A673 (cell line): ENCODE measurements at regions of chr1 and their contacts with region 1.

Region 1: DNA sequence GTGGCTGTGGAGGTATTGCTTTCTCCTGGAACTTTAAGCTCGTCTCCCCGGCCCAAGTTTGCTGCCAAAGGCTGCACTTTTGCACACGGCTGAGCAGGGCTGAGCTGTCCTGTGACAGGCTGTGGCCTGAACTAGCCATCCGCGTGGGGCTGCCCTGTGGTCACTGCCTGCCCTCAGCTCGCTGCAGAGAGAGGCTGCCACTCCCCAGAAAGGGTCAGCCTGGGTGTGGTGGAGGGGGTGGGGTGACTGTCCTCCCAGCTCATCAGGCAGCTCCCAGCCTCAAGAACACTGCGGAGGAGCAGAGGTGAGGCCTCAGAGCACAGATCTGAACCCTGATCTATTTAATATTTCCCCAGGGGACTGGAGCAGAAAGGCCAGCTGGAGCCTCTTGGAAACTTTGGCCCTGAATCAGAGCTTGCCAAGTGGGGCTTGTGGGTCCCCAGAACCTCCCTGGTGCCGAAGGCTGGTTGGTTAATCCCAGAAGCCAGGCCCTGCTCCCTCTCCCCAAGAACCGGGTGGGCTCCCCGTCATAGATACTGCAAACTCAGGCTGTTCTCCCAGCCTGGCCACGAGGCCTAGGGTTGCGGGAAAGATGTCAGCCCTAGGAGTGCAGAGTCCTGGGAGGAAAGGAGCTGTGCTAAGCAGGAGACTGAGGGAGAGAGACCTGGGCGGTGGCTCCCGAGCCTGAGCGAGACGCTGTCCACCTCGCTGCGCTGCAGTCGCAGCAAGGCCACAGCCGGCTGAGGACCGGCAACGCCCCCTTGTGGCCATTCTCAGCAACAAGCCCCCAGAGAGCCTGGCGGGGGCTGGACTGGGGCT is 125.1 kb upstream of the IPO9 start:
- DNase-seq: peak; percentile 87
- H3K4me3 ChIP-seq: no peak overlapping the region
- H3K27ac ChIP-seq: no peak overlapping the region
- H3K4me1 ChIP-seq: peaks cover 30% of the 10 kb centered on the region
- H3K27me3 ChIP-seq: no peaks in the 10 kb centered on the region
- CTCF ChIP-seq: peak; percentile 96

Region 2: GRCh38 chr1:201649761-201650622 is 53.8 kb before region 1 on chr1:
- CTCF ChIA-PET with region 1: interaction called, 4 read pairs
- POLR2A ChIA-PET with region 1: no interaction called
- intact Hi-C with region 1: loop called (anchors 5 kb)
- DNase-seq: peak; percentile 89
- H3K4me3 ChIP-seq: peak overlapping the region; percentile 60
- H3K27ac ChIP-seq: peak overlapping the region; percentile 12
- H3K4me1 ChIP-seq: peaks cover 28% of the 10 kb centered on the region
- H3K27me3 ChIP-seq: no peaks in the 10 kb centered on the region
- CTCF ChIP-seq: no peak